Endothelial cell of umbilical vein (primary cell): ENCODE measurements at regions of chr2 and their contacts with region 1.

Region 1: GRCh38 chr2:223601932-223602666 is at the start of gene SCG2:
- DNase-seq: peak; percentile 76
- H3K4me3 ChIP-seq: no peak within 1 kb of the TSS
- H3K27ac ChIP-seq: no peak within 1 kb of the TSS
- H3K4me1 ChIP-seq: no peaks in the 10 kb centered on the region
- H3K27me3 ChIP-seq: peaks cover 10 to 13% of the 10 kb centered on the region in 2 experiments
- CTCF ChIP-seq: no peak
- POLR2A ChIP-seq: no peak
- total RNA-seq, gene SCG2: not detected in 2 replicates

Region 2: DNA sequence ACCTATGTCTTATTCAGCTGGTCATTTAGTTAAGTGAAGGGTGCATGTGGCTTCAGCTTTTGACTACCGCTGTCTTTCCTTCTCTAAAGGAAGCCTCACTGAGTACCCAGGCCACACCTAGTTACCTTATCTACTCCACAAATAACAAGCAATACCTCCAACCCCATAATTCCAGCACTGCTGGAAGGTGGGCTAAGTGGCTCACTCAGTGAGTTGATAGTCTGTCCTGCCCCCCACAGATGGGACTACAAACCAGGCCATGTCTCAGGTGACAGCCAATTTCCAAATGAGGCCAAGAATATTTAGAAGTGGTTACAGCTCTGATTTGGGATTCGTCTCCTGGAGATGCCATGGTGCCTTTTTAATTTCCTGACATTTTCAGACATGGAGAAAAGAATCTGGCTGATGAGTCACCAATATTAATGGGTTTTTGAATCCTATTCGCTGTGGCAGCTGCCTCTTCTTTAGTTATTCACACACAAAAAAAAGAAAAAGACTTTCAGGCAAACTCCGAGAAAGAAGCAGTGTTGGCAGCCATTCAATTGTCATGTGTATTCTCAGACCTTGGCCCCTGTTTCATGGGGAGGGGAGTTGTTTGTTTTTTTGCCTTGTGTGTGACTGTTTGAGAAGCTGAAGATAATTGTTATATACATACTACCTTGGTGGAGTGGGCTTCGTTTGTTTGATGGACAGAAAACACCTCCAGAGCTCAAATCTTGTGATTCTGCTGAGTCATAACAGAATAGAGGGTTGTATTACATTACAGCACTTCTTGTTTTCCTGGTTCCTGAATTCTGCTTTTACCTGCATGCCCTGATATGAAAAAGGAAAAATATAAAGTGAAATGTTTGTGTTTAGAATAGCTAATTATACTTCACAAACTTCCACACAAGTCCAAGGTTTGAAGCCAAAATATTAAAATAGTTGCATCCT is 64.2 kb before region 1 on chr2:
- CTCF ChIA-PET with region 1: interaction called, 11 read pairs
- POLR2A ChIA-PET with region 1: no interaction called
- dilution Hi-C with region 1: no loop called
- intact Hi-C with region 1: no loop called
- DNase-seq: peak; percentile 21
- H3K4me3 ChIP-seq: no peak overlapping the region
- H3K27ac ChIP-seq: no peak overlapping the region
- H3K4me1 ChIP-seq: no peaks in the 10 kb centered on the region
- H3K27me3 ChIP-seq: peaks cover 6 to 9% of the 10 kb centered on the region in 2 experiments
- CTCF ChIP-seq: no peak
- POLR2A ChIP-seq: no peak

Region 3: GRCh38 chr2:223563462-223563861 is 38.6 kb before region 1 on chr2:
- CTCF ChIA-PET with region 1: no interaction called
- POLR2A ChIA-PET with region 1: no interaction called
- dilution Hi-C with region 1: no loop called
- intact Hi-C with region 1: loop called (anchors 2 kb)
- DNase-seq: peak; percentile 73
- H3K4me3 ChIP-seq: no peak overlapping the region
- H3K27ac ChIP-seq: peak overlapping the region; percentile 23
- H3K4me1 ChIP-seq: peaks cover 8% of the 10 kb centered on the region
- H3K27me3 ChIP-seq: peaks cover 0 to 2% of the 10 kb centered on the region in 2 experiments
- CTCF ChIP-seq: no peak
- POLR2A ChIP-seq: no peak